A549 (cell line): ENCODE measurements at regions of chr1 and their contacts with region 1.

Region 1: DNA sequence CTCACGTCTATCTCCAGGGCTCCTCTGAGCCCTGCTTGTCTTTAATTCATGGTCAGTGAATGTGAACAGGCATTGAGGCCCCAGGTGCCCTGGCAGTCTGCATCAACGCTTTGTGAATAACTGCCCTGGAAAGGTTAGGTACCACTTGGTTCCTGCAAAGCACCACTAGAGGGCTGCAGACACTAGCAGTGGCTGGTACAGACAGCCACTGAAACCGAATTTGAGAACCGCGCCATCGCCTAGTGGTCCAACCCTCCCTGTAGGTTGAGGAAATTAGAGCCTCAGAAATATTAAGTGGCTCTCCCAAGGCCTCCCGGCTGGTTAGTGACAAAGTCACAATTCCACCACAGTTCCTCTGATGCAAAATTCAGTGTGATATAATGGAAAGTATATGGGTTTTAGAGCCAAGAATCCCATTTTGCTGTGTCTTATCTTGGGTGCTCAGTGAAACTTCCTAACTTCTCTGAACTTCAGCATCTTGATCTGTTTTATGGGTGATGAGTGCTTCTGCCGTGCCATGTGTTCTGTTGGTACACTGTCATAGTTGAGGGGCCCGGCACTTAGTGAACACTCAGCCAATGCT is 46.2 kb upstream of the BCL9 start:
- DNase-seq: peak; percentile 68 to 77
- ATAC-seq: peak; percentile 95 to 99
- H3K4me3 ChIP-seq: no peak overlapping the region
- H3K27ac ChIP-seq: no peak overlapping the region
- H3K4me1 ChIP-seq: no peaks in the 10 kb centered on the region
- CTCF ChIP-seq: peak; percentile 93
- EP300 ChIP-seq: no peak
- POLR2A ChIP-seq: no peak
- RAD21 ChIP-seq: peak; percentile 96 to 97

Region 2: DNA sequence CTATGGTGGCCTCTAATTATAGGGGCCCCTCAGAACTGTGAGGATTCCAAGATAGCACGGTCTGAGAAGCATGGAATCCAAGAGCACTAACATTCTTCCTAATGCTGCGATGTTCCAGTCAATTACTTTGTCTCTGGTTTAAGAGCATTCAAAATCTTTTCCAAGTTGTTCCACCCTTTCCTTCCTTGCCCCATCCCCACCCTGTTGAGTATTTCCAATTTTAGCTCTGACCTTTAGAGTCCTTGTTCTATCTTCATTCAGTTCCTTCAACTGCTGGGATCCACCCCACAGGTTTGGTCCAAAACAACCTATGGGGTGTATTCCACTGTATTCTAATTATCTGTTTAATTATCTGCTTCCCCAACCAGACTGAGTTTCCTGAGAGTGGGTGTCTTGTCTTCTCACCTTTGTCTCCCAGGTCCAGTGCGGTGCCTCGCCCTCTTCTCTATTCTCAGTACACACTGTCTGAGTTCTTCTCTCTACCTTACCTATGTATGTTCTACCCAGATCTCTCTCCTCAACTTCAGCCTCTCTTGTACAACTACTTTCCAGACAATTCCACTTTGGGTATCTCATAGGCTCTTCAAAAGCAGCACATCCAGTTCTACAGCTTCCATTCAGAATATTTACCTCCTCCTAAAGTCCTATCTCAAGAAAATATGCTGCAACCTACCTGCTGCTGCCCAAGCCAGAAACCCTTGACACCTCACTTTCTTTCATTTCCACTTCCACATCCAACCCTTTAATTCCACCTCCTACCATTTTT is 21.3 kb after region 1 on chr1:
- CTCF ChIA-PET with region 1: interaction called, 13 read pairs
- POLR2A ChIA-PET with region 1: no interaction called
- DNase-seq: no peak
- ATAC-seq: no peak
- H3K4me3 ChIP-seq: no peak overlapping the region
- H3K27ac ChIP-seq: no peak overlapping the region
- H3K4me1 ChIP-seq: peaks cover 9% of the 10 kb centered on the region; the same call in 2 of the 3 replicates
- CTCF ChIP-seq: no peak
- EP300 ChIP-seq: no peak
- POLR2A ChIP-seq: no peak
- RAD21 ChIP-seq: no peak

Region 3: GRCh38 chr1:147627435-147628110 is 132.5 kb after region 1 on chr1:
- CTCF ChIA-PET with region 1: interaction called, 27 read pairs
- POLR2A ChIA-PET with region 1: no interaction called
- DNase-seq: peak; percentile 43 to 81
- ATAC-seq: peak; percentile 72 to 89
- H3K4me3 ChIP-seq: no peak overlapping the region
- H3K27ac ChIP-seq: no peak overlapping the region
- H3K4me1 ChIP-seq: no peaks in the 10 kb centered on the region
- CTCF ChIP-seq: peak; percentile 79
- EP300 ChIP-seq: no peak
- POLR2A ChIP-seq: no peak
- RAD21 ChIP-seq: peak; percentile 66 to 70